ENCODE measurements at regions of chr16 and their contacts with region 1.

Region 1: GRCh38 chr16:66406534-66407221 is 20.4 kb upstream of the BEAN1 start:
- DNase-seq: peak; percentile 75 to 93 (median 88)
- ATAC-seq: peak; percentile 72
- H3K4me3 ChIP-seq: peak overlapping the region; percentile 83
- H3K4me3 Mint-ChIP-seq: peak overlapping the region; percentile 85
- H3K27ac ChIP-seq: no peak overlapping the region
- H3K27ac Mint-ChIP-seq: peak overlapping the region; percentile 62
- H3K4me1 ChIP-seq: peaks cover 28% of the 10 kb centered on the region
- H3K4me1 Mint-ChIP-seq: peaks cover 27% of the 10 kb centered on the region
- H3K27me3 ChIP-seq: no peaks in the 10 kb centered on the region
- H3K27me3 Mint-ChIP-seq: no peaks in the 10 kb centered on the region
- CTCF ChIP-seq: peak; percentile 93

Region 2: DNA sequence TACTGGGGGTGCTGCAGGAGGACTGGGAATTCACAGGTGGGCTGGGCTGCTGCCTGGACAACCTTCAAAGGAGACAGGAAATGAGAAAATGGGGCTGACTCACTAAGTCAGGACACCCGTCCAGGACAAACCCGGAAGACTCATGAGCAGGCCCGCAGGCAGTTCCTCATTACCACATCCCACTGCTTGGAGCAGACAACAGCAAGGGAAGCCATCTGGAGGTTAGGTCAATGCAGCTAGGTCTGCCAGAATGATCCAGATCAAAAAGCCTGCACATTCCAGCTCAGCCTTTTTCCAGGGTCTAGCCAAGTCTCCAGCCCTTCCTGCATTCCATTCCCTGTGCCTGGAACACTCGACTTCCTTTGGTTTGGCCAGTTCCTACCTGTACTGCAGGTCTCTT is 748.3 kb before region 1 on chr16:
- CTCF ChIA-PET with region 1: no interaction called
- POLR2A ChIA-PET with region 1: no interaction called
- intact Hi-C with region 1: no loop called
- DNase-seq: no peak
- ATAC-seq: no peak
- H3K4me3 ChIP-seq: no peak overlapping the region
- H3K4me3 Mint-ChIP-seq: no peak overlapping the region
- H3K27ac ChIP-seq: no peak overlapping the region
- H3K27ac Mint-ChIP-seq: no peak overlapping the region
- H3K4me1 ChIP-seq: no peaks in the 10 kb centered on the region
- H3K4me1 Mint-ChIP-seq: no peaks in the 10 kb centered on the region
- H3K27me3 ChIP-seq: no peaks in the 10 kb centered on the region
- H3K27me3 Mint-ChIP-seq: no peaks in the 10 kb centered on the region
- CTCF ChIP-seq: no peak

Region 3: DNA sequence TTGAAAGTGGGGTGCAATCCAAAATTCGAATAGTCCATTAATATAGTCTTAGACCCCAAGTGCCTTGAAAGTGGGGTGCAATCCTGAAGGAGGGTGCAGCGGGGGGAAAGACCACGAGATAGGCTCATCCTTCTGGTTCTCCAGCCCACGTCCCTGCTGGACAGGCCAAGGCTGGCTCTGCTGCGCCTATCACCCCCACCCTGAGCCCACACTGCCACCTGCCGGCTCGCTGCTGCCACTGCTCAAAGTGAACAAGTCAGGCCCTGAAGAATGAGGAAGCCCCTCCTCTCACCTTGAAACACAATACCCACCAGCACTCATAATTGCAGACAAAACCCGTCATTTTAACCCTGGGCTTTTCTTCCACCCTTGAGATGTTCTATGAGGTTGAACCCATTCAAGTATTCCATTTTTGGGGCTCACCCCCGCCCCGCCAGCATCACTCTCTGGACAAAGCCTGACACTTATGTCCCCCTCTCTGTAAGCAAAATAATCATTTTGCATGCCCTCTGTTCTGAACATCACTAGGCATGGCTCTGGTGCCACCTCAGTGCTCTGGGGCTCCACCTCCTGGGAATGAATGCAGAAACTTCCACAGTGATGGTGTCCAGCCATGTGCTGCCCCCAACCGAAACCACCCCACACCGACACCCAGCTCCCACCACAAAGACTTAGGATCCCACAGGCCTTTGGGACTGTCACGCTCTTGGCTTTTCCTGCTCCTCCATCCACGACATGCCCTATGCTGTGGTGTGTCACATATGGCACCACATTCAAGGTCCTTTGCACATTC is 77.2 kb after region 1 on chr16:
- CTCF ChIA-PET with region 1: interaction called, 8 read pairs
- POLR2A ChIA-PET with region 1: interaction called, 7 read pairs
- intact Hi-C with region 1: loop called (anchors 1 kb)
- DNase-seq: peak; percentile 57 to 83 (median 68)
- ATAC-seq: peak; percentile 85
- H3K4me3 ChIP-seq: no peak overlapping the region
- H3K4me3 Mint-ChIP-seq: no peak overlapping the region
- H3K27ac ChIP-seq: no peak overlapping the region
- H3K27ac Mint-ChIP-seq: peak overlapping the region; percentile 28
- H3K4me1 ChIP-seq: peaks cover 23% of the 10 kb centered on the region
- H3K4me1 Mint-ChIP-seq: peaks cover 15% of the 10 kb centered on the region
- H3K27me3 ChIP-seq: no peaks in the 10 kb centered on the region
- H3K27me3 Mint-ChIP-seq: no peaks in the 10 kb centered on the region
- CTCF ChIP-seq: peak; percentile 95

Region 4: GRCh38 chr16:66569827-66570405 is 163.2 kb after region 1 on chr16:
- CTCF ChIA-PET with region 1: no interaction called
- POLR2A ChIA-PET with region 1: no interaction called
- intact Hi-C with region 1: no loop called
- DNase-seq: no peak
- ATAC-seq: no peak
- H3K4me3 ChIP-seq: no peak overlapping the region
- H3K4me3 Mint-ChIP-seq: no peak overlapping the region
- H3K27ac ChIP-seq: no peak overlapping the region
- H3K27ac Mint-ChIP-seq: peak overlapping the region; percentile 63
- H3K4me1 ChIP-seq: no peaks in the 10 kb centered on the region
- H3K4me1 Mint-ChIP-seq: no peaks in the 10 kb centered on the region
- H3K27me3 ChIP-seq: no peaks in the 10 kb centered on the region
- H3K27me3 Mint-ChIP-seq: no peaks in the 10 kb centered on the region
- CTCF ChIP-seq: no peak

Region 5: GRCh38 chr16:66728117-66728787 is 321.6 kb after region 1 on chr16:
- CTCF ChIA-PET with region 1: interaction called, 5 read pairs
- POLR2A ChIA-PET with region 1: no interaction called
- intact Hi-C with region 1: loop called in 1 of 2 experiments (anchors 2 kb)
- DNase-seq: peak in 4 of 14 experiments; percentile 11 to 68 (median 60)
- ATAC-seq: peak; percentile 87
- H3K4me3 ChIP-seq: no peak overlapping the region
- H3K4me3 Mint-ChIP-seq: no peak overlapping the region
- H3K27ac ChIP-seq: no peak overlapping the region
- H3K27ac Mint-ChIP-seq: peak overlapping the region; percentile 5
- H3K4me1 ChIP-seq: no peaks in the 10 kb centered on the region
- H3K4me1 Mint-ChIP-seq: peaks cover 6% of the 10 kb centered on the region
- H3K27me3 ChIP-seq: no peaks in the 10 kb centered on the region
- H3K27me3 Mint-ChIP-seq: no peaks in the 10 kb centered on the region
- CTCF ChIP-seq: peak; percentile 83

Region 6: GRCh38 chr16:66740010-66740409 is 333.3 kb after region 1 on chr16:
- CTCF ChIA-PET with region 1: interaction called, 7 read pairs
- POLR2A ChIA-PET with region 1: no interaction called
- intact Hi-C with region 1: loop called (anchors 2 kb)
- DNase-seq: peak in 8 of 14 experiments; percentile 5 to 67 (median 18)
- ATAC-seq: peak; percentile 64
- H3K4me3 ChIP-seq: no peak overlapping the region
- H3K4me3 Mint-ChIP-seq: no peak overlapping the region
- H3K27ac ChIP-seq: no peak overlapping the region
- H3K27ac Mint-ChIP-seq: peak overlapping the region; percentile 45
- H3K4me1 ChIP-seq: peaks cover 17% of the 10 kb centered on the region
- H3K4me1 Mint-ChIP-seq: peaks cover 24% of the 10 kb centered on the region
- H3K27me3 ChIP-seq: no peaks in the 10 kb centered on the region
- H3K27me3 Mint-ChIP-seq: no peaks in the 10 kb centered on the region
- CTCF ChIP-seq: peak; percentile 70

Region 7: GRCh38 chr16:66872943-66873684 is 466.4 kb after region 1 on chr16:
- CTCF ChIA-PET with region 1: interaction called, 7 read pairs
- POLR2A ChIA-PET with region 1: interaction called, 4 read pairs
- intact Hi-C with region 1: loop called (anchors 2 kb)
- DNase-seq: peak; percentile 75 to 94 (median 82)
- ATAC-seq: peak; percentile 90
- H3K4me3 ChIP-seq: peak overlapping the region; percentile 57
- H3K4me3 Mint-ChIP-seq: peak overlapping the region; percentile 75
- H3K27ac ChIP-seq: peak overlapping the region in 1 of 2 donors; percentile 24
- H3K27ac Mint-ChIP-seq: peak overlapping the region; percentile 32
- H3K4me1 ChIP-seq: peaks cover 26% of the 10 kb centered on the region
- H3K4me1 Mint-ChIP-seq: peaks cover 21% of the 10 kb centered on the region
- H3K27me3 ChIP-seq: no peaks in the 10 kb centered on the region
- H3K27me3 Mint-ChIP-seq: no peaks in the 10 kb centered on the region
- CTCF ChIP-seq: peak; percentile 92

Region 8: GRCh38 chr16:67129422-67129821 is 722.7 kb after region 1 on chr16:
- CTCF ChIA-PET with region 1: no interaction called
- POLR2A ChIA-PET with region 1: no interaction called
- intact Hi-C with region 1: no loop called
- DNase-seq: no peak
- ATAC-seq: no peak
- H3K4me3 ChIP-seq: no peak overlapping the region
- H3K4me3 Mint-ChIP-seq: no peak overlapping the region
- H3K27ac ChIP-seq: no peak overlapping the region
- H3K27ac Mint-ChIP-seq: no peak overlapping the region
- H3K4me1 ChIP-seq: no peaks in the 10 kb centered on the region
- H3K4me1 Mint-ChIP-seq: no peaks in the 10 kb centered on the region
- H3K27me3 ChIP-seq: no peaks in the 10 kb centered on the region
- H3K27me3 Mint-ChIP-seq: no peaks in the 10 kb centered on the region
- CTCF ChIP-seq: no peak